Activated CD4-positive, alpha-beta memory T cell treated with anti-CD3 and anti-CD28 coated beads for 36 hours (primary cell): ENCODE measurements at regions of chr3 and their contacts with region 1.

Region 1: DNA sequence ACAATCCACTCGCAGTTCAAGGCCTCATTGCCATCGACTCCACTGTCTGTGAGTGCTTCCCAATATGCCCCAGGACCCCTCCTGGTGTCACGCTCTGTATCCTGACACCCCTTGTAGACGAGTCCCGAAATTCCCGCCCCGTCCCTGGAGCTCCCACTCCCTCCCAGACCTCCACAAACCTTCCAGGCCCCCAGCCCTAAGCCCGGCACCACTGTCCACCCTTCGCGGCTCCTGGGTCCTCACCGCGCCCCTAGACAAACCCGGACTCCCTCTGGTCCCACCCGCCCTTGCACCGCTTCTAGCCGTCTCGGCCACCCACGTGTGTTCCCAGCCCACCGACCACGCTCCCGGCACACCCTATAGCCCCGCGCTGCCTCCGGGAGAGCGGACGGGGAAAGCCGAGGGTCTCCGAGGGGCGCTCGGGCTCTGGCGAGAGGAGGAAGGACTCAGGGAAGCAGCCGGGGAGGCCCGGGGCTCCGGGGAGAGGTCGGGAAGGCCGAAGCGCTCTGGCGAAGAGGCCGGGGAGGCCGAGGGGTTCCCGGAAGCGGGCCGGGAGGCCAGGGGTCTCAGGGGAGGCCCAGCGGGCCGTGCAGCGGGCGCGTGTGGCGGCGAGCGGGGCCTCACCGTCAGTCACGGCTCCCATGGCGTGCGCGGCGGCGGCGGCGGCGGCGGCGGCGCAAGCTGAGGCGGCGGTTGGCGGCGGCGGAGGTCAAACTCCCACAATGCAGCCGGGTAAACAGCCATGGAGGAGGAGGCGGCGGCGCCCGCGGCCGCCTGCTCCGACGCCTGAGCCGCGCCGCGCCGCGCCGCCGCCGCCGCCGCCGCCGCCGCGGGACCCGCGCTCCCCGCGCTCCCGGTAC is at the starts of genes ATXN7 and THOC7:
- DNase-seq: peak; percentile 70
- H3K4me3 Mint-ChIP-seq: peak within 1 kb of the TSS; percentile 92
- H3K27ac Mint-ChIP-seq: peak within 1 kb of the TSS; percentile 93
- H3K4me1 Mint-ChIP-seq: peaks cover 43% of the 10 kb centered on the region
- H3K27me3 Mint-ChIP-seq: no peaks in the 10 kb centered on the region
- total RNA-seq, gene ATXN7: 26.3 to 29.4 TPM
- total RNA-seq, gene THOC7: 85.2 to 88.9 TPM

Region 2: GRCh38 chr3:63967675-63968611 is 104.6 kb after region 1 on chr3:
- CTCF ChIA-PET with region 1: no interaction called
- POLR2A ChIA-PET with region 1: no interaction called
- intact Hi-C with region 1: loop called (anchors 5 kb)
- DNase-seq: peak; percentile 45
- H3K4me3 Mint-ChIP-seq: peak overlapping the region; percentile 71
- H3K27ac Mint-ChIP-seq: peak overlapping the region; percentile 90
- H3K4me1 Mint-ChIP-seq: peaks cover 88% of the 10 kb centered on the region
- H3K27me3 Mint-ChIP-seq: no peaks in the 10 kb centered on the region

Region 3: DNA sequence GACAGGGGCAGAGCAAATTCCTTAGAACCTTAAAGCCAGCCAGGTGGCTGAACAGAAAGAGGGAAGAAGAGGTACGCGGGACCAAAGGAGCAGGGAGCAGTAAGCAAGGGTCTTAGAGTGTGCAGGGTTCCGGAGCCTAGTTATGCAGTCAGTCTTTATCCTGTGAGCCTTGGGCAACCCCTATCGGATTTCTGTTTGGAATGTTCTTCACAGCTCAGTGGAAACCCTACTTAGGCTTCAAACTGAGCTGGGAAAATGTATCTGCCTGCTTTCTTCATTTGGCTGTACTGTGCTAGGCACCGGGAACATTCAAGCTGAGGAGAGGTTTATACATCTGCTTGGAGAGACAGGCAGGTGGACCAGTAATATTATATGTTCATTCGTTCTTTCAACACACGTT is 122.8 kb after region 1 on chr3:
- CTCF ChIA-PET with region 1: no interaction called
- POLR2A ChIA-PET with region 1: no interaction called
- intact Hi-C with region 1: no loop called
- DNase-seq: no peak
- H3K4me3 Mint-ChIP-seq: no peak overlapping the region
- H3K27ac Mint-ChIP-seq: no peak overlapping the region
- H3K4me1 Mint-ChIP-seq: peaks cover 57% of the 10 kb centered on the region
- H3K27me3 Mint-ChIP-seq: no peaks in the 10 kb centered on the region